ENCODE measurements at regions of chr1 and their contacts with region 1.

Region 1: DNA sequence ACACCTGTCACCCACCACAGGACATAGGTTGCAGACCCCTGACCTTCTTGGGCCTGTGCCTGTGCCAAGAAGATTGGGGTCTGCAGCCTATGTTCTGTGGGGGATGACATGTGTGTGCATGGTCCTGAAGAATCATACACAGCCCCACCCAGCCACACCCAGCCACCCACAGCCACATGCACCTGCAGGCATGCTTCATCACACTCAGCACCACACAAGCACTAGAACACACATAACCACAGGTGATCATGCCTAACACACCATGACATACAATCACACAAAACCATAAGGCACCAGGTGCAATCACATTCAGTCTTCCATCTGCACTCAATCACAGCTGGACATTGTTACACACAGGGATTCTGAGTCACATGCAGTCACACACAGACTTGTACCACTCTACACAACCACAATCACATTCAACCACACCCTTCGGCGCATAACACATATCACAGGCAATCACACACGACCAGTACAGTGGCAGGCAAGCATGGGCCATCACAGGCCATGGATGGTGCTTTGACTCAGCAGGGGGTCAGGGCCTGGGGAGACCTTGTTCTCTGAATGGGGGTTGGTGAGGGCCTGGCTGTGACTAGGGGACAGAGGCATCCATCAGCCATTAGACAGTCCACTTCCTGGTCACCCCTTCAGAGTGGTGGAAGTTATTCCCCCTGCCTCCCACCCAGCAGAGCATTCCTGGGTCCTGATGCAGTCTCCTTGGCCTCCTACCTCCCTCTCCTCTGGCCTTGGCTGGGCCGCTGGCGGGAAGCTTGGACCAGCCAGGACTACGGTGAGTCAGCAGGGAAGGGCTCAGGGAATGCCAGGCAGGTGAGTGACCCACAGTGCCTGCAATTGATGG is 44.3 kb upstream of the EPS8L3 start:
- DNase-seq: no peak
- ATAC-seq: no peak; the same call in 2 of the 3 replicates
- H3K4me3 ChIP-seq: no peak overlapping the region
- H3K27ac ChIP-seq: no peak overlapping the region
- H3K4me1 ChIP-seq: peaks cover 0 to 13% of the 10 kb centered on the region in 2 experiments; a peak in 4 of 5 replicates
- H3K27me3 ChIP-seq: no peaks in the 10 kb centered on the region
- CTCF ChIP-seq: no peak
- EP300 ChIP-seq: no peak
- POLR2A ChIP-seq: no peak
- RAD21 ChIP-seq: no peak

Region 2: DNA sequence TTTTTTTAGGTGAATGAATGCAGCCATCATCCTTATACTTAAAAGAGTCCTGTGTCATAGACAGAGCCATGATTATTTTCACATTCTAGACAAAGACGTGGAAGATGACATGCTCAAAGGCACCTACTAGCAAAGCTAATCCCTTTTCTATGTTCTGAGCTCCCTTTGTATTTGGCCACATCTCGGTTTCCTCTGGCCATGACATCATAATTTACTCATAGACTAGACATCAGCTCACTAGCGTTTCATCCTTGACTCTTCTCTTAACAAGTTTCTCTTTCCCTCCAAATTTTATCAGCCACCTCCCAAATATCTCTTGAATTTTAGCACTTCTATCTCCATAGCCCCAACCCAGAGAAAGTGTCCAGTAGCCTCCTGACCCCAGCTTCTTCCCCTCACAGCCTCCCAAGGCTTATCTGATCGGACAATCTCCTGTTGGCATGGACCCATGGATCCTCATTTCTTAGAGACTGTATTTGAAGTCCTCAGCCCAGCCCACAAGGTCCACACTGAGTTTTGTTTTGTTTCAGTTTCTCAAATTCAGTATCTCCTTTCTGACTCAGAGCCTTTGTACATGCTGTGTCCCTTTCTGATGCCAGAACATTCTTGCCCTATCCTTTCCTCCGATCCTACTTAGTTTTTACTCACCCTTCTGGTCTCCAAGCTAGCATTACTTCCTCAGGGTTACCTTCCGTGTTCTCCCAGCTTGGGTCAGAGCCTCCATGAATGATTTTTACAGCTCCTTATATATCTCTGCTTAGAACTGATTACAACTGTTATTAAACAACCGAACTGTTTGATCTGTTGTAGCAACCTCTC is 11.4 kb before region 1 on chr1:
- CTCF ChIA-PET with region 1: interaction called, 4 read pairs
- POLR2A ChIA-PET with region 1: interaction called, 10 read pairs
- in situ Hi-C with region 1: no loop called
- intact Hi-C with region 1: no loop called
- DNase-seq: peak in 2 of 4 experiments; percentile 52 to 58
- ATAC-seq: no peak
- H3K4me3 ChIP-seq: no peak overlapping the region
- H3K27ac ChIP-seq: peak overlapping the region; percentile 6; the same call in 2 of the 3 replicates
- H3K4me1 ChIP-seq: peaks cover 31 to 45% of the 10 kb centered on the region in 2 experiments
- H3K27me3 ChIP-seq: no peaks in the 10 kb centered on the region
- CTCF ChIP-seq: no peak
- EP300 ChIP-seq: no peak
- POLR2A ChIP-seq: no peak
- RAD21 ChIP-seq: no peak

Region 3: DNA sequence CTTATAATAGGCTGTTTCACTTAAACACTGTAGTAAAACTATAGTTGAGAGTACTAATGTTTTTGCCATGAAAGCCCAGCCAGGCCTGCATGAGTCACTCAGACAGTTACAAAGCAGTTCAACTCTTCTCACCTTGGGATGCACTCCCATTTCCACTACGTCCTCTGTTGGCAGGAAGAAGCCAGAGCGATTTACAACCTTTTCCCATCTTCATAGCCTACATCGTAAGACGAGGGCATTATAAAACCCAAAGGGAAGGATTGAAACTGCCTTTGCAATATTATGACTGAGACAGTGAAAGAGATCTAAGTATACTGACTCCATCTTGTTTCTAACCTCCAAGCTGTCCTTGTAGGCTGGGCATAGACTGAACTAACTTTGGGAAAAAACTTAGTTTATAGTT is 30.8 kb after region 1 on chr1:
- CTCF ChIA-PET with region 1: no interaction called
- POLR2A ChIA-PET with region 1: no interaction called
- in situ Hi-C with region 1: no loop called
- intact Hi-C with region 1: no loop called
- DNase-seq: peak in 1 of 4 experiments; percentile 58
- ATAC-seq: peak; percentile 72
- H3K4me3 ChIP-seq: no peak overlapping the region
- H3K27ac ChIP-seq: peak overlapping the region; percentile 3; the same call in 1 of the 3 replicates
- H3K4me1 ChIP-seq: peaks cover 0 to 14% of the 10 kb centered on the region in 2 experiments; a peak in 2 of 5 replicates
- H3K27me3 ChIP-seq: no peaks in the 10 kb centered on the region
- CTCF ChIP-seq: 0 out of 6 replicates have a peak, but pooled peaks of 1 of the 3 experiments have one; percentile 18
- EP300 ChIP-seq: no peak
- POLR2A ChIP-seq: no peak
- RAD21 ChIP-seq: peak; percentile 15 to 48; a peak in 3 of 4 replicates

Region 4: DNA sequence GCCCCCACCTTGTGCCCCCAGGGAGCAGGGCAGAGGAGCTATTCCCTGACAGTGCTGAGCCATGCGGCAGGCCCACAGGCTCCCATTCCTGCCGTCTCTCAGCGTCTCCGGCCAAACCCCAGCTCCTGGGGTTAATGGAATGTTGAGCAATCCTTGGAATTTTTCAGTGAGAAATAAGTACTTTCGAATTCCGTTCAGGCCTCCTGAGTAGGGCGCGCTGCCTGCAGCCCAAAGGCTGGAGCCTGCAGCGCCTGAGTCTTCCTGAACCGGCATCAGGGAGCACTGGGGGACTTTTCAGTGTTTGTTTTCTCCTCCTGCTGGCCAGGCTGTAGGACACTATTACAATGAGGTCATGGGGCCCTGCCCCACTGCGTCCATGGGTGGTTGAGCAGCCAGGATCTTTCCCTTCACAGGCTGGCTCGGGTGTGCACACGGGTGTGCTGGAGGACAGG is 69.3 kb after region 1 on chr1:
- CTCF ChIA-PET with region 1: no interaction called
- POLR2A ChIA-PET with region 1: no interaction called
- in situ Hi-C with region 1: no loop called
- intact Hi-C with region 1: no loop called
- DNase-seq: peak; percentile 47 to 58 (median 49)
- ATAC-seq: peak; percentile 82
- H3K4me3 ChIP-seq: no peak overlapping the region
- H3K27ac ChIP-seq: no peak overlapping the region
- H3K4me1 ChIP-seq: peaks cover 15 to 23% of the 10 kb centered on the region in 2 experiments; a peak in 4 of 5 replicates
- H3K27me3 ChIP-seq: no peaks in the 10 kb centered on the region
- CTCF ChIP-seq: peak; percentile 51 to 74 (median 53)
- EP300 ChIP-seq: no peak
- POLR2A ChIP-seq: no peak
- RAD21 ChIP-seq: peak; percentile 7 to 56; a peak in 2 of 4 replicates

Measured in K562 (cell line).